Caco-2 (cell line): ENCODE measurements at regions of chr9 and their contacts with region 1.

Region 1: DNA sequence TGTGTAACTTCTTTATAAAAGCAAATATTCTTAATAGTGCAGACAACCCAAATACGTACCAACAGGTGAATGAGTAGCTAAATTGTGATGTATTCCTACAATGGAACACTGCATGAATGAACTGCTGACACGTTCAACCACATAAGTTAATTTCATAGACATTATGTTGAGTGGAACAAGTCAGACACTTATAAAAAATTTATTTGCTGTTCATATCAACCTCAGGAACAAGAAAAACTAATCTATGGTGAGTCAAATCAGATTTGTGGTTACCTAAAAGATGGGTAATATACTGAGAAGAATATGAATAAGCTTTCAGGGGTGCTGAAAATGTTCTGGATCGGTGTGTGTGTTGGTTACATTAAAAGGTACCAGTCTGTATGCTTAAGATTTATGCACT is 35.7 kb downstream of the INVS start:
- DNase-seq: no peak
- H3K4me3 ChIP-seq: no peak overlapping the region
- H3K4me3 Mint-ChIP-seq: no peak overlapping the region
- H3K27ac Mint-ChIP-seq: no peak overlapping the region
- H3K4me1 ChIP-seq: no peaks in the 10 kb centered on the region
- H3K4me1 Mint-ChIP-seq: no peaks in the 10 kb centered on the region
- H3K27me3 ChIP-seq: no peaks in the 10 kb centered on the region
- H3K27me3 Mint-ChIP-seq: no peaks in the 10 kb centered on the region
- CTCF ChIP-seq: no peak

Region 2: DNA sequence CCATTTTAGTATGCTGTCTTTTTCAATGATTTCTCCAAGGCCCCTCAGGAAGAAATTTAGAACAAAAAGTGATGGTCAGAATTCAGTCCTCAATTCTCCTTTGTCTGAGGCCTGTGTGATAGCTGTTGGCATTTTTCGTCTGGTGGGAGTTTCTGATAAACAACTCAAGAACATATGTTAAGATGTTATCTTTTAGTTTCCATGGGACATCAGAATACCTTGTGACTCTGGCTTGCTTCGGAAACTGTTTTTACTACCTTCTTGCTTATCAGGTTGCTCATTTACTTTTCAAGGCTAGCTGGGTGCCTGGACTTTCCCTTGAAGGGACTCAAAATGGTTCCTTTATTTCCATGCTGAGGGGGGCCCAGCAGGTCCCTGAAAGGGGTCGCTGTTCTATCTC is 61.5 kb after region 1 on chr9:
- CTCF ChIA-PET with region 1: no interaction called
- POLR2A ChIA-PET with region 1: no interaction called
- intact Hi-C with region 1: no loop called
- DNase-seq: no peak
- H3K4me3 ChIP-seq: no peak overlapping the region
- H3K4me3 Mint-ChIP-seq: no peak overlapping the region
- H3K27ac Mint-ChIP-seq: no peak overlapping the region
- H3K4me1 ChIP-seq: no peaks in the 10 kb centered on the region
- H3K4me1 Mint-ChIP-seq: no peaks in the 10 kb centered on the region
- H3K27me3 ChIP-seq: no peaks in the 10 kb centered on the region
- H3K27me3 Mint-ChIP-seq: no peaks in the 10 kb centered on the region
- CTCF ChIP-seq: no peak

Region 3: GRCh38 chr9:100216178-100216787 is 81.6 kb after region 1 on chr9:
- CTCF ChIA-PET with region 1: no interaction called
- POLR2A ChIA-PET with region 1: no interaction called
- intact Hi-C with region 1: loop called (anchors 5 kb)
- DNase-seq: peak; percentile 44 to 58
- H3K4me3 ChIP-seq: no peak overlapping the region
- H3K4me3 Mint-ChIP-seq: no peak overlapping the region
- H3K27ac Mint-ChIP-seq: no peak overlapping the region
- H3K4me1 ChIP-seq: no peaks in the 10 kb centered on the region
- H3K4me1 Mint-ChIP-seq: no peaks in the 10 kb centered on the region
- H3K27me3 ChIP-seq: no peaks in the 10 kb centered on the region
- H3K27me3 Mint-ChIP-seq: no peaks in the 10 kb centered on the region
- CTCF ChIP-seq: peak; percentile 50 to 65

Region 4: DNA sequence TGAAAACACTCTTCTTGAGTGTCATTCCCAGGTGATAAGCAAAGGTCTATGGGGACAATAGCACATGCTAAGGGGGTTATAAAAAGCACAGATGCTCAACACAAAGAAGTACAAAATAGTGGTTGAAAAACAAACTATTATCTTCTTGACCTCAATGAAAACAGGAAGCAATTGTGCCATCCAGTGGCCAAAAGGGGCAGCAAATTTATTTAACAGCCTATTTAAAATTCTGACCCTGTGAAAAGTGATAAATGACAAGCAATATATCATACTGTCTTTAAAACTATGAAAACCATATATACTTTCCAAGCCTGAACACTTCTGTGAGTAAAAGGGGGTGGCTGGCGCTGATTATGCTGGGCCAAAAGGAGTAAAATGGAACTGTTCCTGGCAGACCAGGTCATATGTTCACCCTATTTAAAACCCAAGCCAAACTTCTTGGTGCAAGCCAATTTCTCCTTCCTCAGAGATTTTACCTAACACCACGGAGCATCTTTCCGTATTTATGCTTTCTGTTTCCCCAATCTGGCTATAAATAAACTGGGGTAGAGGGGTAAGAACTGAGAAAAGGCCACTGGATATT is 188.3 kb after region 1 on chr9:
- CTCF ChIA-PET with region 1: no interaction called
- POLR2A ChIA-PET with region 1: no interaction called
- intact Hi-C with region 1: loop called (anchors 5 kb)
- DNase-seq: peak; percentile 26 to 44
- H3K4me3 ChIP-seq: no peak overlapping the region
- H3K4me3 Mint-ChIP-seq: no peak overlapping the region
- H3K27ac Mint-ChIP-seq: no peak overlapping the region
- H3K4me1 ChIP-seq: no peaks in the 10 kb centered on the region
- H3K4me1 Mint-ChIP-seq: no peaks in the 10 kb centered on the region
- H3K27me3 ChIP-seq: no peaks in the 10 kb centered on the region
- H3K27me3 Mint-ChIP-seq: no peaks in the 10 kb centered on the region
- CTCF ChIP-seq: peak; percentile 53 to 58